SK-N-SH (cell line): ENCODE measurements at regions of chr17 and their contacts with region 1.

Region 1: GRCh38 chr17:48878918-48879898 is 13.4 kb upstream of the ATP5MC1 start:
- DNase-seq: peak; percentile 87
- H3K4me3 ChIP-seq: no peak overlapping the region
- H3K27ac ChIP-seq: no peak overlapping the region
- H3K4me1 ChIP-seq: no peaks in the 10 kb centered on the region
- H3K27me3 ChIP-seq: peaks cover 26% of the 10 kb centered on the region; the same call in 1 of the 2 replicates
- CTCF ChIP-seq: peak; percentile 100
- EP300 ChIP-seq: no peak
- RAD21 ChIP-seq: peak; percentile 100

Region 2: DNA sequence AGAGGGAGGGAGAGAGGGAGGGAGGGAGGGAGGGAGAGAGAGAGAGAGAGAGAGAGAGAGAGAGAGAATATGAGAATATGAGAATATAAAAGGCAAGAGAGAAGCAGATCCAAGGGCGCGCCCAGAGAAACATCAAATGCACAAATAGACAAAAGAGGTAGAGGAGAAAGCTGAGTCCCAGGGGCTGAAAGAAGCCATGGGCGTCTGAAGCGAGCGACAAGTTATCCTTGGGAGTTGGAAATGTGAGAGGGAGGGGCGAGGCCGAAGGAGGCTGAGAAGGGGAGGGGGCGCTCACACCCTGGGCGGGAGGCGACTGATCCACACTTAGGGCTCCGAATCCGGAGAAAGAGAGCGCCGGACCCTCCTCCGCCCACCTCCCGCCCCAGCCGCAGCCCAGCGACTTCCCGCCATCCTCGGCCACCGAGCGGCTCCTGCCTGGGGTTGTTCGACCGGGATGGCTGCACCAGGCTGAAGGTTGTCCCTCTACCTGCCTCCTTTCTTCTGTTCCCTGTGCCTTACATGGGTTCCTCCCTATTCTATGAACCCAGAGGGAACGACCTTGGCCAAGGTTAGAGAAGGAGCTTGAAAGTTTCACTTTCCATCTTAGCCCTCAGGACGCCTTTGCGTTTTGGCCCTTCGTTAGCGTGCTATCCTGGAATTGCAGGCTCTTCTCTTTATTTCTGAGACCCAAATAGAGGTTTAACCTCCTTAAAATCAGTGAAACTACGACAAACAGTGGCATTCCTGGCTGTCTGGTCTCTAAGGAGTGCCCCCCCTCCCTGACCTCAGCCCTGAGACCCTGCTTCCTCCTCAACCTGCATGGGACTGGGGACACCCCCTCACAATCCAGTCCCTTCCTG is 231.9 kb before region 1 on chr17:
- CTCF ChIA-PET with region 1: interaction called, 11 read pairs
- POLR2A ChIA-PET with region 1: no interaction called
- DNase-seq: peak; percentile 42
- H3K4me3 ChIP-seq: peak overlapping the region in 1 of 2 experiments; percentile 56; a peak in 2 of 4 replicates
- H3K27ac ChIP-seq: no peak overlapping the region
- H3K4me1 ChIP-seq: no peaks in the 10 kb centered on the region
- H3K27me3 ChIP-seq: peaks cover 84% of the 10 kb centered on the region
- CTCF ChIP-seq: no peak
- EP300 ChIP-seq: no peak
- RAD21 ChIP-seq: no peak

Region 3: DNA sequence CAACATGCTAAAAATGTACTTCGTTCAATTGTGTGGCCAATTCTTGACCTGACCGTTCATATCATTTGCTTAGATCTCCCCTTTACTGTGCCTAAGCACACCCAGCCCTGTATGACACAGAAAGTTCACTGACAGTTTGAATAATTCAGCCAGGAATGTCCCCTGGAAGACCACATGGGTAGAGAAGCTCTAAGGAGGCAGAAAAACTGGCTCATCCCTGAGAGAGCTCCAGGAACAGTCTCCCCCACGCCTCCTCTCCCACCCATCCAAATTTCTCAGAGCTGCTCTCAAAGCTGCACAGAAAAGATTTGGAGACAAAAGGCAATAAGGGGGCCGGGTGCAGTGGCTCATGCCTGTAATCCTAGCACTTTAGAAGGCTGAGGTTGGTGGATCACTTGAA is 168.1 kb before region 1 on chr17:
- CTCF ChIA-PET with region 1: interaction called, 16 read pairs
- POLR2A ChIA-PET with region 1: no interaction called
- DNase-seq: no peak
- H3K4me3 ChIP-seq: no peak overlapping the region
- H3K27ac ChIP-seq: no peak overlapping the region
- H3K4me1 ChIP-seq: no peaks in the 10 kb centered on the region
- H3K27me3 ChIP-seq: peaks cover 97% of the 10 kb centered on the region
- CTCF ChIP-seq: no peak
- EP300 ChIP-seq: no peak
- RAD21 ChIP-seq: no peak

Region 4: DNA sequence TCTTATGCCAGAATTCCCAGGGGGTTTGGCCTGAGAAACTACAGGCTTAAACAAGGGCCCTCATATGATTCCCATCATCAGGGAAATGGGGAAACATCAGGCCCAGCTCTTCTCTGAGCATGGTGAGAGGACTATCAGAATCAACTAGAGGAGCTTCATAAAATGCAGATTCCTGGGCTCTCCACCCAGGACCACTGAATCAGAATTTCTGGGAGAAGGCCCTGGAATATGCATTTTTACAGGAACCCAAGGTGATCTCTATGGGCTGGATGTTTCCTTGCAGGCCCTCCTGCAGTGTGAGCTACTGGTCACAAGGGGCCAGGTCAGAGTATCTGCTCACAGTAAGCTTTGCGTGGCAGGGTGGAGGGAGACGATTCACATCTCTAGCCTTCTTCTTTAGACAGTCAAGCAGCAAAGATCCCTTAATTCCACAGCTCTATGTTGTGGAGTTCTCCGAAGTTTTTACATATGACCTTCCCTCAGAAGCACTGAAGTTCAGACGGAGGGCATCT is 111.9 kb before region 1 on chr17:
- CTCF ChIA-PET with region 1: interaction called, 24 read pairs
- POLR2A ChIA-PET with region 1: no interaction called
- DNase-seq: no peak
- H3K4me3 ChIP-seq: no peak overlapping the region
- H3K27ac ChIP-seq: no peak overlapping the region
- H3K4me1 ChIP-seq: no peaks in the 10 kb centered on the region
- H3K27me3 ChIP-seq: peaks cover 90% of the 10 kb centered on the region
- CTCF ChIP-seq: no peak
- EP300 ChIP-seq: no peak
- RAD21 ChIP-seq: no peak

Region 5: GRCh38 chr17:48836004-48836403 is 43.2 kb before region 1 on chr17:
- CTCF ChIA-PET with region 1: interaction called, 54 read pairs
- POLR2A ChIA-PET with region 1: interaction called, 3 read pairs
- DNase-seq: no peak
- H3K4me3 ChIP-seq: no peak overlapping the region
- H3K27ac ChIP-seq: no peak overlapping the region
- H3K4me1 ChIP-seq: peaks cover 3 to 11% of the 10 kb centered on the region in 2 experiments; a peak in 3 of 4 replicates
- H3K27me3 ChIP-seq: no peaks in the 10 kb centered on the region
- CTCF ChIP-seq: no peak
- EP300 ChIP-seq: no peak
- RAD21 ChIP-seq: no peak

Region 6: DNA sequence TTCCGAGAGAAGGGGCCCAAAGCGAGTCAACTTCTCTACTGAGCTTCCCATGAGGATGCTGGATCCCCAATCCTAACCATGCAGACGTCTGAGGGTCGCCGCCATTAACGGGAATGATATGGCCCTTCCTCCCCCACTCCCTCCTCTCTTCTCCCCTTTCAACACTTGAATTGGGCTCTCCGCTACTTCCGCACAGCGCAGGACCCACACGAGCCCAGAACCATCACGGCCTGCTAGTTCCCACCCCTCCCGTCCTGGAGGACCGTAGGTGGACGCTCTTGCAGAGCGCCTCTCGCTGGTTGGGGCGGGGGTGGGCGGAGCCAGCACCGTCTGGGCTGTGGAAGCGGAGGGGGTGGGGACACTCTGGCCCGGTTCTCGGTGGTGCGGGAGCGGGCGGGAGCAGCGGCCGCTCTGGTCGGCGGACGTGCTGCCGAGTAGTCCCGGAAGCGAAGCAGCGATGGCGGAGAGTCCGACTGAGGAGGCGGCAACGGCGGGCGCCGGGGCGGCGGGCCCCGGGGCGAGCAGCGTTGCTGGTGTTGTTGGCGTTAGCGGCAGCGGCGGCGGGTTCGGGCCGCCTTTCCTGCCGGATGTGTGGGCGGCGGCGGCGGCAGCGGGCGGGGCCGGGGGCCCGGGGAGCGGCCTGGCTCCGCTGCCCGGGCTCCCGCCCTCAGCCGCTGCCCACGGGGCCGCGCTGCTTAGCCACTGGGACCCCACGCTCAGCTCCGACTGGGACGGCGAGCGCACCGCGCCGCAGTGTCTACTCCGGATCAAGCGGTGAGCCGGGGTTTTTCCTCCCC is 29.0 kb after region 1 on chr17 and contains the start of gene UBE2Z:
- CTCF ChIA-PET with region 1: interaction called, 20 read pairs
- POLR2A ChIA-PET with region 1: no interaction called
- DNase-seq: peak; percentile 100
- H3K4me3 ChIP-seq: peak within 1 kb of the TSS; percentile 63 to 87
- H3K27ac ChIP-seq: peak within 1 kb of the TSS; percentile 86 to 94
- H3K4me1 ChIP-seq: peaks cover 17 to 24% of the 10 kb centered on the region in 2 experiments
- H3K27me3 ChIP-seq: no peaks in the 10 kb centered on the region
- CTCF ChIP-seq: no peak
- EP300 ChIP-seq: no peak; a peak in 1 of 4 replicates
- RAD21 ChIP-seq: no peak
- polyA plus RNA-seq, gene UBE2Z: 168 and 207 TPM in 2 replicates

Region 7: GRCh38 chr17:49063652-49064051 is 184.4 kb after region 1 on chr17:
- CTCF ChIA-PET with region 1: no interaction called
- POLR2A ChIA-PET with region 1: no interaction called
- DNase-seq: no peak
- H3K4me3 ChIP-seq: no peak overlapping the region
- H3K27ac ChIP-seq: no peak overlapping the region
- H3K4me1 ChIP-seq: no peaks in the 10 kb centered on the region
- H3K27me3 ChIP-seq: peaks cover 96% of the 10 kb centered on the region
- CTCF ChIP-seq: no peak
- EP300 ChIP-seq: no peak
- RAD21 ChIP-seq: no peak